Panc1 (cell line): ENCODE measurements at regions of chr14 and their contacts with region 1.

Region 1: GRCh38 chr14:91286530-91286937 is 42.0 kb upstream of the GPR68 start:
- DNase-seq: peak; percentile 38
- ATAC-seq: peak; percentile 94
- H3K4me3 ChIP-seq: no peak overlapping the region
- H3K27ac ChIP-seq: no peak overlapping the region
- H3K4me1 ChIP-seq: no peaks in the 10 kb centered on the region
- H3K27me3 ChIP-seq: no peaks in the 10 kb centered on the region
- CTCF ChIP-seq: peak; percentile 80

Region 2: DNA sequence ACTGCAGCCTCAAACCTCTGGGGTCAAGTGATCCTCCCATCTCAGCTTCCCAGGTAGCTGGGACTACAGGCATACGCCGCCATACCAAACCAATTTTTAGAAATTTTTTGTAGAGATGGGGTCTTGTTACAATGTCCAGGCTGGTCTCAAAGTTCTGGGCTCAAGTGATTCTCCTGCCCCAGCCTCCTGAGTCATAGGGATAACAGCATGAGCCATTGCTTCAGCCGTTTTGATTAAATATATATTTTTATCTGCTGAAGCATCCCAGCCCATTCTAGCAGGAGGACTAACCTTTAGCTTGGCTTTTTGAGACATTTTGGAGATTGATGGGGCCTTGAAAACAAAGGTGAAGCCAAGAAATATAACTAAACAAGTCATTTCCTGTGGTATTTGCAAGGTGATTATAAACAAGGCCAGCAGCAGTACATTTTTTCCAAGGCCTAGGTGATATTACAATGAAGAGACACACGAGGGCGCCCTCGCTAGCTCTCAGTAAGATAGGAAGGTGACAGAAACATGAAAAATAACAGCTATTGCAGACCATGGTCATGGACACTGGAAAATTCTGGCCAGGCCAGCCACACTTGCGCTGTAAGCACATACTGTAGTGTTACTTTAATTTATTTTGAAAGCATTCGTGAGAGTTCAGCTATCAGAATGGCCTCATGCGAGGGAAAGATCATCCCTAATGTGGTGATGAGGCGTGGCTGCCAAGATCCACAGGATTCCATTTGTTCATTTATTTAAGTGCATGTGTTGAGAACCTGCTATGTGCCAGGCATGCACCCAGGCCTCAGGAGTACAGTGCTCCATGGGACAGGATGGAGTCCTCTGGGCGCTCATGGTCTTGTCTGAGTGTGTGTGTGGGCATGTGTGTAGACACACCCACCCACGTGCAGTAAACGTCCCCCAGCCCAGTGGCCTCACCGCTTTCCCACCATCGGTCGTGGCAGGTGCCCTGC is 109.2 kb before region 1 on chr14:
- CTCF ChIA-PET with region 1: interaction called, 7 read pairs
- POLR2A ChIA-PET with region 1: no interaction called
- in situ Hi-C with region 1: no loop called
- intact Hi-C with region 1: loop called (anchors 1 kb)
- DNase-seq: peak; percentile 46
- ATAC-seq: peak; percentile 66; the same call in 1 of the 2 replicates
- H3K4me3 ChIP-seq: no peak overlapping the region
- H3K27ac ChIP-seq: no peak overlapping the region
- H3K4me1 ChIP-seq: no peaks in the 10 kb centered on the region
- H3K27me3 ChIP-seq: no peaks in the 10 kb centered on the region
- CTCF ChIP-seq: peak; percentile 83